Heart right ventricle (tissue), 16 donors: ENCODE measurements at regions of chr19 and their contacts with region 1.

Region 1: GRCh38 chr19:53103198-53103944 is at the start of gene ZNF160:
- DNase-seq: peak; percentile 100
- ATAC-seq: peak; percentile 99
- H3K4me3 ChIP-seq: peak within 1 kb of the TSS; percentile 75 to 97 (median 85)
- H3K27ac ChIP-seq: peak within 1 kb of the TSS; percentile 84 to 98 (median 94)
- H3K4me1 ChIP-seq: peaks cover 9 to 46% (median 25%) of the 10 kb centered on the region in 9 donors
- H3K27me3 ChIP-seq: no peaks in the 10 kb centered on the region
- CTCF ChIP-seq: no peak
- total RNA-seq, gene ZNF160: 9.8 to 22.9 (median 18.5) TPM

Region 2: GRCh38 chr19:53034948-53035680 is 68.3 kb before region 1 on chr19:
- intact Hi-C with region 1: no loop called
- DNase-seq: no peak
- ATAC-seq: no peak
- H3K4me3 ChIP-seq: no peak overlapping the region
- H3K27ac ChIP-seq: no peak overlapping the region
- H3K4me1 ChIP-seq: no peaks in the 10 kb centered on the region
- H3K27me3 ChIP-seq: peaks cover 0 to 31% (median 0%) of the 10 kb centered on the region in 7 donors
- CTCF ChIP-seq: no peak

Region 3: DNA sequence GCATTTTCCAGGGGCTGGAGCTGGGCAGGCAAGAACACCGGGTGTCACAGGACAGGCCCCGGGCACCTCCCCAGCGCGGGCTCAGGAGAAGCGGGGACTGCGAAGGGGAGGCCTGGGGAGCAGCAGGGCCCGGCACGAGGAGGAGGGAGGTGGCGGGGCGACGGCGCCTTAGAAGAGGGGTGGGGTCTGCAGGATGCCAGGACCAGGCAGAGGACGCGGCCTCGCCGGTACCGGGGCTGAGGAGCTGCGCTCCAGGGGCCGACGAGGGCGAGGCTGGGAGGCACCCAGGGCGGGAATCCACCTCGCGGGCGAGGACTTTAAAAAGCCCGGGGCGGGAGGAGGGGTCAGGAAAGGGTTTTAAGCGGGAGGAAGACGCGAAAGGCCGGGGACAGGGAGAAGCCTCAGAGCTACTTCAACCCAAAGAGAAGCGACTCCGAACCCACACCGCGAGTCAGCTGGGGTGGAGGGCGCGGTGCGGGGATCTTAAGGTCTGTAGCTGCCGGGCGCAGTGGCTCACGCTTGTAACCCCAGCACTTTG is 54.8 kb after region 1 on chr19:
- intact Hi-C with region 1: loop called in 3 of 10 experiments (anchors 2 to 5 kb)
- DNase-seq: peak; percentile 23 to 47
- ATAC-seq: peak; percentile 31 to 68 (median 50)
- H3K4me3 ChIP-seq: peak overlapping the region; percentile 65 to 84 (median 74)
- H3K27ac ChIP-seq: peak overlapping the region; percentile 66 to 85 (median 80)
- H3K4me1 ChIP-seq: peaks cover 0 to 26% (median 18%) of the 10 kb centered on the region in 9 donors
- H3K27me3 ChIP-seq: no peaks in the 10 kb centered on the region
- CTCF ChIP-seq: no peak